ENCODE measurements at regions of chr16 and their contacts with region 1.

Region 1: DNA sequence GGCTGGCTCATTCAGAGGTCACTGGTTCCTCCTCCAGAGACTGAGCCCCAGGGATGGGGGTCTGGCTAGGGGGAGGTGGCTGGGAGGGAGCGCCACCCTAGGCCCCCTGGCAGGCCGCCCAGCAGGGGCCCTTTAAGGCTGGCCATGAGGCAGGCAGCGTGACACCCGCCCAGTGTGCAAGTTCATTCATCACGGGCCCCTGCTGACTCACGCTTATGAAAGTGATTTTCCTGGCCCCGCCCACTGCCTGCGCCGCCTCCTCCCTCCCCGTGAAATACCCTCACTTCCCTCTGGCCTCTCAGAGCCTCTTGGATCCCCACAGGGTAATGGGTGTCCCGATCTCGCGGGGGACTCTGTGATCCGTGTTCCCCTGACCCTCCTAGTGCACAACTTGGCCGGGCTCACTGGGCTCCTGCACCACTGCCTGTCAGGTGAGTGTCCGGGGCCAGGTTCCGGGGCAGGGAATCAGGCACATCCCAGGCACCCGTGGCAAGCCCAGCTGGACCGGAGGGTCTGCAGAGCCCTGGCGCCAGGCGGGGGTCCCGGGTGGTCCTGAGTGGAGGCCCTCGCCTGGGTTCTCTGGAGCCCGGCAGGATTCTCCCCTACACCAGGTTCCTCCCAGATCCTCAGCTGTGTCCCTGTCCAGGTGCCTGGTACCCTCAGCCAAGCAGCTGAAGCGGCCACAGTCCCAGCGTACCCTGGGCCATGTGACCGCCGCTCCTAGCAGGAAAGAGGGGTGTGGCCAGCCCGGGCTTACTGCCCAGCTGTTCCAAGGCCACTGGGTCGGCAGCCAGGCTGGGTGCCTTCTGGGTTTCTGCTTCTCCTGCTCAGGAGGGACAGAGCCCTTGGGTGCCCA is at the start of gene OSGIN1:
- DNase-seq: peak; percentile 86
- H3K4me3 ChIP-seq: peak within 1 kb of the TSS; percentile 40
- H3K27ac ChIP-seq: peak within 1 kb of the TSS; percentile 22
- H3K4me1 ChIP-seq: peaks cover 22% of the 10 kb centered on the region
- H3K27me3 ChIP-seq: no peaks in the 10 kb centered on the region
- CTCF ChIP-seq: no peak
- total RNA-seq, gene OSGIN1: 1.2 and 2.4 TPM in 2 replicates

Region 2: DNA sequence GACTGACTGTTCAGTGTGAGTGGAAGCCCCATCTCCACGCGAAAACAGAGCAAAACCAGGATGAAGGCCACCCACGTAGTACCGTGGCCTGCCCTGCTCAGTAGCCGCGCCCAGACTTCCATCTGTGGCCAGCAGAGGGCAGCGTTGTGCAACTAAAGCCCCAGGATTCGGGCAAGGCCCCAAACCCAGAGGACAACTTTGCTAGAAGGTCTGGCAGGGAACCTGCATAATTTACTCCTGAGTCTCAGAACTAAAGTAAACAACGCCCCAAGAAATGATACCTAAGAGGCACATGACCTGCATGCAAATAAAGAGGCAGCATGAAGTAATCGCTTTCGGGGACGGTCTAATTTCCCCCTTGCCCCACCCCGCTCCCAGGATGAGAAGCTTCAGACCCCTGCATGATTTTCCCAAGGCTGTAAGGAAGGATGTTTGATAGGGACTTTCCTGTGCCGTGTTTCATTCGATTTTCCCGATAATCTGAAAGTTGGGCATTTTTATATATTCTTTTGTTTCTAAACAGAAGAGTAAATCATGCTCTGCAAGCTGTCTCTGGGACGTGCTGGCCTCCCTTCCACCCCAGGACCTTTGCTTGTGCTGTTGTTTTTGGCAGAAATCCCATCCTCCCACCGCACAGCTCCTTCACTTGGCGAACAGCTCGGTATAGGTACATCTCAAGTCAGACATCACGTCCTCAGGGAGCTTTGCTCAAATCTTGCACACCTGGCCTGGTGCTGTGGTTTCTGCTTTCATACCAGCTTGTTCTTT is 126.8 kb before region 1 on chr16:
- CTCF ChIA-PET with region 1: no interaction called
- POLR2A ChIA-PET with region 1: no interaction called
- intact Hi-C with region 1: loop called (anchors 5 kb)
- DNase-seq: peak; percentile 82
- H3K4me3 ChIP-seq: no peak overlapping the region
- H3K27ac ChIP-seq: no peak overlapping the region
- H3K4me1 ChIP-seq: no peaks in the 10 kb centered on the region
- H3K27me3 ChIP-seq: peaks cover 5% of the 10 kb centered on the region
- CTCF ChIP-seq: peak; percentile 93

Region 3: GRCh38 chr16:84504420-84505248 is 551.5 kb after region 1 on chr16 and contains the start of gene MEAK7:
- CTCF ChIA-PET with region 1: interaction called, 5 read pairs
- POLR2A ChIA-PET with region 1: no interaction called
- intact Hi-C with region 1: loop called (anchors 5 kb)
- DNase-seq: peak; percentile 99
- H3K4me3 ChIP-seq: peak within 1 kb of the TSS; percentile 72
- H3K27ac ChIP-seq: peak within 1 kb of the TSS; percentile 84
- H3K4me1 ChIP-seq: peaks cover 3% of the 10 kb centered on the region
- H3K27me3 ChIP-seq: no peaks in the 10 kb centered on the region
- CTCF ChIP-seq: no peak
- total RNA-seq, gene MEAK7: 11.6 and 12.4 TPM in 2 replicates

Measured in A673 (cell line).